GM10248 (cell line): ENCODE measurements at regions of chr5 and their contacts with region 1.

Region 1: DNA sequence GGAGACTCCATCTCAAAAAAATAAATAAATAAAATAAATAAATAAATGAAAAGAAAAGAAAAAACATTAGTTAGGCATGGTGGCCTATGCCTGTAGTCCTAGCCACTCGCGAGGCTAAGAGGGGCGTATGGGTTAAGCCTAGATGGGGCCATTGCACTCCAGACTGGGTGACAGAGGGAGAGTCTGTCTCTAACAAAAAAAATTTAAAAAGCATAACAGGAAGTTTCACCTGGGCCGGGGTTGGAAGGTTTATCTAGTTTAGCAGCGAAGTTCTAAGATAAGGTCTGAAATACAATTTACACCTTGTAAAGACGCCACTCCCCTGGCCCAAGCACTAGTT is 18.0 kb downstream of the ZMAT2 start:
- DNase-seq: no peak
- CTCF ChIP-seq: no peak

Region 2: GRCh38 chr5:140357726-140358093 is 360.5 kb before region 1 on chr5:
- CTCF ChIA-PET with region 1: interaction called, 28 read pairs
- POLR2A ChIA-PET with region 1: no interaction called
- DNase-seq: peak; percentile 90
- CTCF ChIP-seq: peak; percentile 92

Region 3: DNA sequence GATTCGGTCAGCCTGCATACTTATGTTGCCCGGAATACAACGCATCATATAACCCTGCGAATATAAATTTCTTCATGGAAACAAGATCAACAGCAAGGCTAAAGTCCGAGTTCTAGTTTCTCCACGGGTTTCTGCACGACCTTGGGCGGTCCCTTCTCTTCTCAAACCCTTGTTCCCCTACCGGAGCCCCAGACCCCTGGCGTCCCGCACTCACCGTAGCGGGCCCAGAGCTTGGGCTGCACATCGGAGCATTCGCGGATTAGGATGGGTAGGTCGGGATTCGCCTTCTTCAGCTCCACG is 71.2 kb before region 1 on chr5:
- CTCF ChIA-PET with region 1: no interaction called
- POLR2A ChIA-PET with region 1: no interaction called
- DNase-seq: no peak
- CTCF ChIP-seq: no peak

Region 4: GRCh38 chr5:140658870-140659269 is 59.3 kb before region 1 on chr5:
- CTCF ChIA-PET with region 1: no interaction called
- POLR2A ChIA-PET with region 1: no interaction called
- DNase-seq: no peak
- CTCF ChIP-seq: no peak

Region 5: DNA sequence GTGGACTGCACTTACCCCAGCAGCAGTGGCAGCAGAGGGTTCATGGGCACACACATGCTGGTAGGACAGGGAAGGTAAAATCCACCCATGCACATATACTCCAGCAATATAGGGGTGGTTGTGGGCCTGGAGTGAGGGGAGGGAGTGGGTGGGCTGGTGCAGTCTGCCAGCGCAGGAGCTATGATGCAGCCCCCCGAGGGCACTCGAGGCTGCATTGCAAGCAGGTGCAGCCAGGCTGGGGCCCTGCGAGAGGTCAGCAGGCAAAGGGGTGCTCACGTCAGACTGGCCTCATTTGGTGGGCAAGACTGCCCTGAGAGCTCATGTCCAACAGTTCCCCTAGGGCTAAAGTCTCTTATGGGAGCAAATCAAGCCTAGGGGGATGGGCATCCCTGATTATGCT is 35.4 kb after region 1 on chr5:
- CTCF ChIA-PET with region 1: no interaction called
- POLR2A ChIA-PET with region 1: no interaction called
- DNase-seq: no peak
- CTCF ChIP-seq: no peak